Spleen (tissue), 13 donors: ENCODE measurements at regions of chr4 and their contacts with region 1.

Region 1: GRCh38 chr4:146916479-146917076 is 29.1 kb downstream of the TTC29 start:
- DNase-seq: no peak
- H3K4me3 ChIP-seq: no peak overlapping the region
- H3K27ac ChIP-seq: no peak overlapping the region
- H3K4me1 ChIP-seq: peaks cover 0 to 8% (median 0%) of the 10 kb centered on the region in 6 donors
- H3K27me3 ChIP-seq: peaks cover 0 to 3% (median 0%) of the 10 kb centered on the region in 7 donors
- CTCF ChIP-seq: peak in 10 of 11 experiments; percentile 7 to 69 (median 60)
- POLR2A ChIP-seq: no peak

Region 2: GRCh38 chr4:146342600-146343192 is 573.9 kb before region 1 on chr4:
- intact Hi-C with region 1: loop called (anchors 10 kb)
- DNase-seq: no peak
- H3K4me3 ChIP-seq: no peak overlapping the region
- H3K27ac ChIP-seq: no peak overlapping the region
- H3K4me1 ChIP-seq: peaks cover 0 to 16% (median 4%) of the 10 kb centered on the region in 6 donors
- H3K27me3 ChIP-seq: no peaks in the 10 kb centered on the region
- CTCF ChIP-seq: peak in 7 of 11 experiments; percentile 13 to 60 (median 37)
- POLR2A ChIP-seq: no peak